ENCODE measurements at regions of chr1 and their contacts with region 1.

Region 1: DNA sequence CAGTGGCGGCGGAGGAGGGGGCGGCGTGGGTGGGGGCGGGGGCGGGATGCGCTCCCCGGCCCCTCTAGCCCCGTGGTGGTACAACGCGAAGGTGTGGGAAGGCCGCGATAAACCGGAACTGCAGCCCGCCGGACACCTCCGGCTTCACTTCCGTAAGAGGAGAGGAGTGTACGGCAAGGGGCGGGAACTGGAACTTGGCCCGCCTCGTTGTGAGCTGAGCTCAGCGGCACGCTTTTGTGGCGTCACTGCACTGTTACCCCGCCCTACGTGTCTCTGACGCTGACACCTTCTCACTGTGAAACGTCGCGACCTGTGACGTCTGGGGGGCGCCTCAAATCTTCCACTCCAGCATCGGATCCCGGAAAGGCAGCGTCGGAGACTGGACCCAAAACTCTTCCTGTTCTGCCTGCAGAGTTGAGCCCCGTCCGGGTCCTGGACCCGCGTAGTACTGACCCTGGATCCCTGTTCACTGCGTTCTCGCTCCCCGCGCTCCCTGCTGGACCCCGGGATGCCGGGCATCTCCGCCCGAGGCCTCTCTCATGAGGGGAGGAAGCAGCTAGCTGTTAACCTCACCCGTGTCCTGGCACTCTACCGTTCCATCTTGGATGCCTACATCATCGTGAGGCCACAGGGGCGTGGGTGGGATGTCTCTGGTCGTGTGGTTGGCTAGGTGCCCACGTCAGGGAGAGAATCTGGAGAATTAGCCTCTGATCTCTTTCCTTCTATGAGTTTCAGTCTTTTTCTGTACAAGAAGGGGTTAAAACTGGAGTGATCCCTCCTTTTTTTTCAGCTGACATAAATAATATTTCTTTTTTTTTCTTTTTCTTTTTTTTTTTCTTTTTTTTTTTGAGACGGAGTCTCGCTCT is at the start of gene ISG20L2:
- DNase-seq: peak; percentile 99
- ATAC-seq: peak; percentile 92
- H3K4me3 Mint-ChIP-seq: no peak within 1 kb of the TSS
- H3K27ac Mint-ChIP-seq: peak within 1 kb of the TSS; percentile 99
- H3K4me1 Mint-ChIP-seq: peaks cover 23% of the 10 kb centered on the region
- H3K27me3 Mint-ChIP-seq: no peaks in the 10 kb centered on the region
- total RNA-seq, gene ISG20L2: 48.4 to 65.2 TPM

Region 2: DNA sequence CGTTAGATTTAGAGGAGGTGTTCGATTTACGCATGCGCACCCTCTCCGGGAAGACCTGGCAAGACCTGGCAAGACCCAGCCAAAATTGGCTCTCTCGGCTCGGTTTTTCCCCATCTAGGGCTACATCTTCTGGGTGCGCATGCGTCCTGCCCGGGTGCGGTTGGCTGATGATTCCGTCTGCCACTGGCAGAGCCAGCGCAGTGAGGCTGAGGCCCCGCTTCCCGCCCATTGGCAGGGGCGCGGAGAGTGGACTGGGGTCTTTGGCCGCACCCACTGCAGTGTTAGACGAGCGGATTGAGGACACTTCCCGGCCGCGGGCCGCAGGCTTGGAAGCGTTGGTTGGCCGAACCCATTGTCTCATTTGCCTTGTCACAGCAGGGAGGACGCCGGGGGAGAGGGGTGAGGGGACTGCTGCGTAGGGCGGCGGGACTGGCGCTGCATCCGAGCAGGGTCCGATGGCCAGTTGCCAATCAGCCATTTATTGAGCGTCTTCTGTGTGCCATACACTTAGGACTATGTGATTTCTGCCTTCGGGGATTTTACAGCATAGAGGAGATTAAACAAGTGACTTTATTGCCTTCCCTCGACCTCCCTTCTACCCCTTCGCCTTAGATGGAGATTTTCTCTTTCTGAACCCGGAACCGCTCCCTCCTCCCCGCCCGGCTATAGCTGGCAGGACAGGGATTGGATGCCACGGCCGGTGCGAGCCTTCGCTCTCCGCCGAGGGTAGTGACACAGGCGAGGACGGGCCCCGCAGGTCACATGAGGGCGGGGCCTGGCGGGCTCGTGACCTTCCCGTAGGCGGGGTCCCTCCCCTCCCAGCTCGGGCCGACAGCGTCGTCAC is 272.0 kb before region 1 on chr1:
- CTCF ChIA-PET with region 1: interaction called, 3 read pairs
- POLR2A ChIA-PET with region 1: no interaction called
- intact Hi-C with region 1: loop called in 1 of 2 experiments (anchors 1 kb)
- DNase-seq: peak; percentile 99
- ATAC-seq: peak; percentile 88
- H3K4me3 Mint-ChIP-seq: peak overlapping the region; percentile 79
- H3K27ac Mint-ChIP-seq: peak overlapping the region; percentile 98
- H3K4me1 Mint-ChIP-seq: peaks cover 22% of the 10 kb centered on the region
- H3K27me3 Mint-ChIP-seq: no peaks in the 10 kb centered on the region

Region 3: GRCh38 chr1:156689035-156689952 is 39.5 kb before region 1 on chr1:
- CTCF ChIA-PET with region 1: interaction called, 220 read pairs
- POLR2A ChIA-PET with region 1: interaction called, 15 read pairs
- intact Hi-C with region 1: loop called (anchors 1 kb)
- DNase-seq: peak; percentile 88
- ATAC-seq: peak; percentile 96
- H3K4me3 Mint-ChIP-seq: peak overlapping the region; percentile 6
- H3K27ac Mint-ChIP-seq: no peak overlapping the region
- H3K4me1 Mint-ChIP-seq: peaks cover 29% of the 10 kb centered on the region
- H3K27me3 Mint-ChIP-seq: peaks cover 48% of the 10 kb centered on the region

Region 4: GRCh38 chr1:156746728-156747631 is 18.1 kb after region 1 on chr1:
- CTCF ChIA-PET with region 1: interaction called, 79 read pairs
- POLR2A ChIA-PET with region 1: interaction called, 26 read pairs
- intact Hi-C with region 1: loop called (anchors 1 kb)
- DNase-seq: peak; percentile 82
- ATAC-seq: no peak
- H3K4me3 Mint-ChIP-seq: peak overlapping the region; percentile 98
- H3K27ac Mint-ChIP-seq: peak overlapping the region; percentile 96
- H3K4me1 Mint-ChIP-seq: peaks cover 57% of the 10 kb centered on the region
- H3K27me3 Mint-ChIP-seq: no peaks in the 10 kb centered on the region

Region 5: GRCh38 chr1:156797212-156797871 is 68.5 kb after region 1 on chr1:
- CTCF ChIA-PET with region 1: interaction called, 19 read pairs
- POLR2A ChIA-PET with region 1: no interaction called
- intact Hi-C with region 1: no loop called
- DNase-seq: peak; percentile 75
- ATAC-seq: peak; percentile 84
- H3K4me3 Mint-ChIP-seq: no peak overlapping the region
- H3K27ac Mint-ChIP-seq: no peak overlapping the region
- H3K4me1 Mint-ChIP-seq: peaks cover 7% of the 10 kb centered on the region
- H3K27me3 Mint-ChIP-seq: no peaks in the 10 kb centered on the region

Region 6: GRCh38 chr1:156927215-156928042 is 198.6 kb after region 1 on chr1:
- CTCF ChIA-PET with region 1: interaction called, 7 read pairs
- POLR2A ChIA-PET with region 1: no interaction called
- intact Hi-C with region 1: loop called in 1 of 2 experiments (anchors 1 kb)
- DNase-seq: peak; percentile 87
- ATAC-seq: peak; percentile 76
- H3K4me3 Mint-ChIP-seq: no peak overlapping the region
- H3K27ac Mint-ChIP-seq: no peak overlapping the region
- H3K4me1 Mint-ChIP-seq: peaks cover 25% of the 10 kb centered on the region
- H3K27me3 Mint-ChIP-seq: peaks cover 64% of the 10 kb centered on the region

Measured in activated CD4-positive, alpha-beta T cell treated with anti-CD3 and anti-CD28 coated beads for 36 hours (primary cell).